Transverse colon (tissue), 4 donors: ENCODE measurements at regions of chr5 and their contacts with region 1.

Region 1: DNA sequence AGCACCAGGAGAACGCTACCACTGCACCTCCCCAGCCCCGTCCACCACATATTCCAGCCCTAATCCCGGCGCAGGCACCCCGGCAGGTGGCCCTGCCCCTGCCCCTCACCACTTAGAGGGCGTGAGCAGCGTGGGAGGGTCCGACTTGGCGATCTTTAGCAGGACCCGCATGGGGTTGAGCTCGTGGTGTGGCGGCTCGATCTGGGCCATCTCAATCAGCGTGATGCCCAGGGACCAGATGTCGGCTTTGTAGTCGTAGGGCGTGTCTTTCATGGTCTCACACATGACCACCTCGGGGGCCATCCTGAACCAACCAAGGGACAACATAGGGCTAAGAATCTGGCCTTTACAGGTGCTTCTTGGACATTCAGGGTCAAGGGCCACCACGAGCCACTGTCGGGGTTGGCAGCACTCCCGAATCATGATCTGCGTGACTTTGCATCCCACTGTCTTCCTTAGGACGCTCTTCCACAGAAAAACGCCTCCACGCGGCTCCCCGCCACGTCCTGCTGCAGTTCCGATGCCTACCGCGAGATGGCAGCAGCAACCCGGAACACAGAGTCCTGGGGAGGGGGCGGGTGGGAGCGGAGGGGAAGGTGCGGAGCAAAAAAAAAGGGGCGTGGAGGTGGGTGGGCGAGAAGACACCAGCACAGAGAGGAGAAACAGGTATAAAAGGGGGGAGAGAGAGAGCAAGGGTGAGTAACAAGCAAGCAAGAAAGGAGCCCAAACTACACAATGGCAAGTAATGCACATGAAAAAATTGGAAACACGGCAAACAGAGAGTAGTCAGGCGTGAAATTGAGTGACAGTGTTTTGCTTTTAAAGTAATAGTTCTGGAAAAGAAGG is 81.3 kb downstream of the STK10 start:
- DNase-seq: peak; percentile 55
- H3K4me3 ChIP-seq: peak overlapping the region in 2 of 4 donors; percentile 6 to 23
- H3K27ac ChIP-seq: peak overlapping the region in 2 of 4 donors; percentile 10 to 21
- H3K4me1 ChIP-seq: peaks cover 15 to 41% (median 29%) of the 10 kb centered on the region in 4 donors
- H3K27me3 ChIP-seq: no peaks in the 10 kb centered on the region
- CTCF ChIP-seq: peak; percentile 91 to 99 (median 97)
- EP300 ChIP-seq: no peak
- POLR2A ChIP-seq: no peak

Region 2: GRCh38 chr5:171681677-171682076 is 425.1 kb before region 1 on chr5:
- in situ Hi-C with region 1: no loop called
- intact Hi-C with region 1: no loop called
- DNase-seq: no peak
- H3K4me3 ChIP-seq: no peak overlapping the region
- H3K27ac ChIP-seq: no peak overlapping the region
- H3K4me1 ChIP-seq: no peaks in the 10 kb centered on the region
- H3K27me3 ChIP-seq: peaks cover 7% of the 10 kb centered on the region
- CTCF ChIP-seq: no peak
- EP300 ChIP-seq: no peak
- POLR2A ChIP-seq: no peak

Region 3: DNA sequence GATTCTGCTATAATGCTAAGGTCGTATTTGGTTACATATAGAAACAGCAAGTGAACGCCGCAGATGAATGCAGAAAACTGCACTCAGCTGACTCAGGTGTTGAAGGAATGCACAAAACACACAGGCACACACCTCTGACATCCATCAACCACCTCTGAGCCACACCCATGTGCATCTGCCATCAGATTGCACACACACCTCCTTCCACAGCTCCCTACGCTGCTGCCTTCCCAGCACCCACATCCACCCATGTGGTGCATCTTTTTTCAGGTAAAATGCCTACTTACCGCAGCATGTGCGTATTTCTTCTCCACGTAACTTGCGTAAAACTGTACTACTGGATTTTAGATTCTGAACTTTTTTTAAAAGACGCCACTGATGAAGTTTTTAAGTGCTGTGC is 74.2 kb after region 1 on chr5:
- in situ Hi-C with region 1: loop called in 2 of 4 experiments (anchors 5 kb)
- intact Hi-C with region 1: loop called (anchors 5 kb)
- DNase-seq: no peak
- H3K4me3 ChIP-seq: no peak overlapping the region
- H3K27ac ChIP-seq: no peak overlapping the region
- H3K4me1 ChIP-seq: peaks cover 0 to 19% (median 6%) of the 10 kb centered on the region in 4 donors
- H3K27me3 ChIP-seq: no peaks in the 10 kb centered on the region
- CTCF ChIP-seq: no peak
- EP300 ChIP-seq: no peak
- POLR2A ChIP-seq: no peak

Region 4: DNA sequence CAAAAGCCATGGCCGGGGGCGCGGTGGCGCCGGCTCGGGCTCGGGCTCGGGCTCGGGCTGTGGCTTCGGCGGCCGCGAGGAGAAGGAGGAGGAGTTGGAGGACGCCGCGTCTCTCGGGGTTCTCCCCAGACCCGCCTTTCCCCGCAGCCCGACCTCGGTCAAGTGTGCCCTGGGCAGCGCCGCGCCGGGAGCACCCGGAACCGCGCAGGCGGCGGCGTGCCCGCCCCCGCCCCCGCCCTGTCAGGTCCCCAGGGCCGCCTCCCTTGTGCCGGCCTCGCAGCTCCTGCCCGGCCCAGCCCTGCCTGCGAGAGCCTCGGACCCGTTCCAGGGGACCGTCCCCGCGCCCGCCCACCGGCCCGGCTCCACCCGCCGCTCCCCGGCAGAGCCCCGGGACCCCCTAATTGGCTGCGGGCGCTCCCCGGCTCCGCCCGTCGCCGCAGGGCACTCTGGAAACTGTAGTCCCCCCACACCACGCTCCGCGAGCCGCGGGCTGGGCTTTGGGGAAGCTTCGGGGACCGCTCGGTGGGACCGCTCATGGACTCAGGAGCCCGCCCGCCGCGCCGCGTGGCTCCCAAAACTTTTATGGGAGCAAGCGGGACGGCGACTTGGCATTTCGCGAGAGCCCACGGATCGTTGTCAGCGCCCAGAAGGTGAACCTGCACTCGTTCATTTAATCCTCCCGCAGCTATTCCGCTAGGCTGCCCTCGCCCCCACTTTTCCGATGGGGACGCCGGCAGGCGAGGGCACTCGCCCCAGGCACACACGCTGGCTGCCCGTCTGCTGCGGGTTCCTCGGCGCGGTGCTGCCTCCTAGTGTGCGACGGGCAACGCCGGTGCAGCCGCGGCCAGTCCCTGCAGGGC is 81.5 kb after region 1 on chr5 and contains the start of gene STK10:
- in situ Hi-C with region 1: loop called in 2 of 4 experiments (anchors 5 kb)
- intact Hi-C with region 1: loop called (anchors 5 kb)
- DNase-seq: peak; percentile 94
- H3K4me3 ChIP-seq: peak within 1 kb of the TSS; percentile 62 to 86 (median 76)
- H3K27ac ChIP-seq: peak within 1 kb of the TSS; percentile 92 to 97 (median 96)
- H3K4me1 ChIP-seq: peaks cover 6 to 27% (median 14%) of the 10 kb centered on the region in 4 donors
- H3K27me3 ChIP-seq: no peaks in the 10 kb centered on the region
- CTCF ChIP-seq: peak; percentile 82 to 92 (median 89)
- EP300 ChIP-seq: no peak
- POLR2A ChIP-seq: peak; percentile 80
- total RNA-seq, gene STK10: 21.2 to 207 (median 49.3) TPM

Region 5: GRCh38 chr5:172283020-172283861 is 176.5 kb after region 1 on chr5 and contains the start of gene UBTD2:
- in situ Hi-C with region 1: loop called in 2 of 4 experiments (anchors 10 to 25 kb)
- intact Hi-C with region 1: loop called (anchors 1 kb)
- DNase-seq: peak; percentile 88
- H3K4me3 ChIP-seq: peak within 1 kb of the TSS; percentile 82 to 97 (median 93)
- H3K27ac ChIP-seq: peak within 1 kb of the TSS; percentile 88 to 98 (median 96)
- H3K4me1 ChIP-seq: peaks cover 0 to 30% (median 21%) of the 10 kb centered on the region in 4 donors
- H3K27me3 ChIP-seq: no peaks in the 10 kb centered on the region
- CTCF ChIP-seq: peak; percentile 30 to 49 (median 46)
- EP300 ChIP-seq: no peak
- POLR2A ChIP-seq: peak; percentile 45
- total RNA-seq, gene UBTD2: 6.0 to 35.4 (median 19.0) TPM

Region 6: GRCh38 chr5:172293054-172293744 is 186.5 kb after region 1 on chr5:
- in situ Hi-C with region 1: loop called (anchors 10 to 25 kb)
- intact Hi-C with region 1: no loop called
- DNase-seq: peak; percentile 67
- H3K4me3 ChIP-seq: no peak overlapping the region
- H3K27ac ChIP-seq: no peak overlapping the region
- H3K4me1 ChIP-seq: peaks cover 0 to 5% (median 4%) of the 10 kb centered on the region in 4 donors
- H3K27me3 ChIP-seq: no peaks in the 10 kb centered on the region
- CTCF ChIP-seq: peak; percentile 76 to 86 (median 84)
- EP300 ChIP-seq: no peak
- POLR2A ChIP-seq: no peak